ENCODE measurements at regions of chr15 and their contacts with region 1.

Region 1: DNA sequence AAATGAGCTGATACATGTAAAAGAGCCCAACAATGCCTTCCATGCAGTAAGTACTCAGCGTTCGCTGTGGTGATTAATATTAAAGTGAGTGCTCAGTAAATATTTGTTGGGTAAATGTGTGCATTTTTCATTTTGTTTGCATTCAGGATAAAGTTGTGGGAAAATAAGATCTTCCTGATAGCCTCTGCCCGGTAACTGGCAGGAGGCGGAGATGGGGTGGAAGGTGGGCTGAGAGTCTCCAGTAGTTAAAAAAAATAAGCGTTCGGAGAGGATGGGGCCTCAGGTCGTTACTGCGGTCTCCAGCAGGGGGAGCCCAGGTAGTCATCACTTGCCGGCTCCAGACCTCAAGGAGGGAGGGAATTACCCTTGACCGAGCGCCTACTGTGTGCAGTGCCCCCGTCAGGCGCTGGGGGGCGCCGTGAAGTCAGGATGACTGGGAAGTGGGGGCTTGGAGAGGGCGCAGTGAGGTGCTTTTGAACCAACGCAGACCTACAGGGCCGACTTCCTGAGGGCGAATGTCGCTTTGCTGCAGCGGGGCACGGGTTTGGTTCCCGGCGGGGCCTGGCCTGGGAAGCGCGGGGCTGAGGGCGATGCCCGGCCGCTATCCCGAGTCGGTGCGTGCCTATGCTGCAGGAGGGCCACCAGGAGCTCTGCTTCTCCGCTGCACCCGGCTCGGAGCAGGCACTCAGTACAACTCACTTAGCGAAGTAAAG is 80.1 kb downstream of the RHCG start:
- DNase-seq: peak; percentile 90 to 94
- ATAC-seq: peak; percentile 74 to 91
- H3K4me3 ChIP-seq: no peak overlapping the region
- H3K27ac ChIP-seq: no peak overlapping the region
- H3K4me1 ChIP-seq: peaks cover under 1% of the 10 kb centered on the region; the same call in 1 of the 3 replicates
- CTCF ChIP-seq: peak; percentile 93
- EP300 ChIP-seq: no peak
- POLR2A ChIP-seq: no peak
- RAD21 ChIP-seq: peak; percentile 59 to 63

Region 2: DNA sequence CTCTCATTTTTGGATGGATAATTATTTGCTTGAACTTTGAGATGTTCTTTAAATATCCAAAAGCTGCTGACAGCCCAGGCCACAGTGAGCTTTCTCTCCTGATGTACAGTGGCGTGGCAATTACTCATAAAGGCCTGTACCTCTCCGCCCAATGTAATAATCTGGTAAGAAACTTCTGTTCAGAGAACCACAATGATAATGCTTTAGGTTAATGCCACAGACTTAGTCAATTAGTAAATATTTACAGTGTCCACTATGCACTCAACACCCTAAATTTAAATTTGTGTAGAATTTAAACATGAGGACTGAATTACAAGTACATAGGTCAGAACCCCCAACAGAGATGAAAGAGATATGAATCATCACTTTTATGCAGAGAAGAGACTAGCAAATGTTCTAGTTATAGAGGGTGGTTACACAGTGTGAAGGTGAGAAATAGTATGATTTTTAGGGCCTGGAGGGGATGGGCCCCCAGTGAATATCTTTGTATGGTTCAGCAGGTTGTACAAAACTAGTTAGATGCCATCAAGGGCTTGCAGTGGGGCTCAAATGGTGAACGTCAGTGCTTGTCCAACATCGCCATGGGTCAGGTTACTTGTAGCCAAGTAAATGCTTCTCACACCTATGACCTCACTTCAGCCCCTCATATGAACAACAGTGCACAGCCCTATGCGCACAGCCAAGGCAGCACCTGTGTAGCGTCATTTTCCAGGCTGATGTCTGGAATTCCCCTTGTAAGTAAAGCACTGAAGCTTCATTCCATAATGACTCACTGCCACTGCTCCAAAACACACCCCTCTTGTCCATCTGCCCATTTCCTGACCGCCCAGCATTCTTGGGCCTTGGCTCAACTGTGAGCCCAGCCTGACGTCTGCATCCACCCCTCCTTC is 314.8 kb before region 1 on chr15:
- CTCF ChIA-PET with region 1: no interaction called
- POLR2A ChIA-PET with region 1: no interaction called
- DNase-seq: peak; percentile 97 to 98
- ATAC-seq: peak; percentile 92 to 93
- H3K4me3 ChIP-seq: no peak overlapping the region; the same call in 2 of the 3 replicates
- H3K27ac ChIP-seq: peak overlapping the region; percentile 85 to 88
- H3K4me1 ChIP-seq: peaks cover 99% of the 10 kb centered on the region
- CTCF ChIP-seq: no peak
- EP300 ChIP-seq: peak; percentile 69 to 71; a peak in 2 of 5 replicates
- POLR2A ChIP-seq: no peak
- RAD21 ChIP-seq: peak; percentile 8 to 24; a peak in 1 of 5 replicates

Region 3: DNA sequence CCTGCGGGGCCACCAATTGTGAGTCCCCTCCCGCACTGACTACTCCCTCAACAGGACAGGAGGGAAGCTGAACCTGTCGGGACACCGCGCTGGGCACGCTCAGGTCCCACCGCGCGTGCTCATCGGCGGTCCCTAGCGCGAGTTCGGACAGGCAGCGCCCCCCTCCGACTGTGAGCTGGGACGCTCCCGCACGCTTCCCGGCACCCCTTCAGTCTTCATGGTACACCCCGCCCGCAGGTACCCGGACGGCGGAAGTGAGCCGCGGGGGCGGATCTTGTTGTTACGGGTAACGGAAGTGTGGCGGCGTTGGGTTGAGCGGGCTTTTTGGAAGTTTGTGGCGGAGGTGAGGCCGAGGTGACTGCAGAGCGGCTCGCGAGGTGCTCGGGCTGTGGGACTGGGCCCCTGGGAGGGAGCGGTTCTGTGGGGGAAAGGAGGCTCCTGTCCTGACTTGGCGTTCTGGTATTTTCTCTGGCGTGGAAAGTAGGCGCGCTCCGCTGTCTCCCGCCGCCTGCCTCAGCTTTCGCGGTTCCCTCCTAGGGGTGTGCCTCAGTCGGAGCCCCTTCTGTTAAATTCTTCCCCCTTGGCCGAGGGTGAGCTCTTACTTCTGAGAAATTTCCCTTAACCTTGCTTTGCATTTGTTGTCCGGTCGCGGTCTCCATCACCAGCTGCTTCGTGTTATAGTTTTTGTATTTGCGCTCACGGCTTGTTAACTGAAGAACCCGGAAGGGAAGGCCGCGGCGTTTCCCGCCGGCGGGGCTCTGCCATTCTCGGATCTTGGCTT is 172.4 kb before region 1 on chr15 and contains the start of gene FANCI:
- CTCF ChIA-PET with region 1: no interaction called
- POLR2A ChIA-PET with region 1: no interaction called
- DNase-seq: peak; percentile 96 to 97
- ATAC-seq: peak; percentile 98
- H3K4me3 ChIP-seq: peak within 1 kb of the TSS; percentile 82
- H3K27ac ChIP-seq: peak within 1 kb of the TSS; percentile 79 to 88
- H3K4me1 ChIP-seq: peaks cover 32% of the 10 kb centered on the region; the same call in 2 of the 3 replicates
- CTCF ChIP-seq: peak; percentile 86
- EP300 ChIP-seq: no peak
- POLR2A ChIP-seq: peak; percentile 85
- RAD21 ChIP-seq: peak; percentile 67 to 77
- polyA plus RNA-seq, gene FANCI: 97.3 and 123 TPM in 2 replicates

Region 4: DNA sequence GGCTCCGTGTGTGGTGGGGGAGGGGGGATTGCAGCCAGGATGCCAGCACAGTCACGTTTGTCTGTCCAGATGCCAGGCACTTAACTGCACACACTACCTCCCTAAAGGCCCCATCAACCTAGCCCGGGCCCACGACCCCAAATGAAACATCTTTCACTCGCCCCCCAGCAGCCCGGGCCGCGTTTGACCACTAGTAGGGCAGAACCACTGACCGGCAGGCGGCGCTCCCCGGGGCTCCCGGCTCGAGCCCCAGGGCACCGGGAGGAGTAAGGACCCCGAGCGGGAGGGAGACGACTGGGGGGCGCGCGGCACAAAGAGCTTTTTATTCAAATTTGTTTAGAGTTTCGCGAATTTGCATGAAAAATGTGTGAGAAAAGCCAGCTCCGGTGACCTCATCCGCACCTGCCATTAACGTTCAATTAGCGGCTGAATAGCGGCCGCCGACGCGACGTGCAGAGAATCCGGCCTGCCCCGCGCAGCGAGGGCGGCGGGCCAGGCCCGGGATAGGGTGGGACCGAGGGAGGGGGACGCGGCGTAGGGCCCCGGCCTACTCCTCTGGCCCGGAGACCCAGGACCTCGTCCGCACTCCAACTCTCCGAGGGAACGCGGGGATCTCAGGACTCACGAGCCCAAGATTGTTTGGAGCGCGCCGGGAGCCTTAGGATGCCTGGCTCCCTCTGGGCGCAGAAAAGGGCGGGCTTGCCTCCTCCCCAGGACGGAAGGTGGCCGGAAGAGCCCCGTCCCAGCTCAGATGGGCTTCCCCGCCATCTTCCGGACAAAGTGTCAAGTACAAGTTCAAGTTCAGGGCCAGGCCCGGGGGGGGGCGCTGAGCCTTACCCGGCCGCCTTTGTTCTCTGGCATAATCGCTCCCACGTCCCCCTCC is 16.8 kb before region 1 on chr15:
- CTCF ChIA-PET with region 1: interaction called, 55 read pairs
- POLR2A ChIA-PET with region 1: no interaction called
- DNase-seq: peak; percentile 84 to 90
- ATAC-seq: peak; percentile 79 to 87
- H3K4me3 ChIP-seq: peak overlapping the region; percentile 79
- H3K27ac ChIP-seq: peak overlapping the region; percentile 86 to 87
- H3K4me1 ChIP-seq: peaks cover 24% of the 10 kb centered on the region
- CTCF ChIP-seq: peak; percentile 62
- EP300 ChIP-seq: no peak
- POLR2A ChIP-seq: peak; percentile 41; the same call in 1 of the 2 replicates
- RAD21 ChIP-seq: peak; percentile 31 to 37; a peak in 2 of 5 replicates

Region 5: DNA sequence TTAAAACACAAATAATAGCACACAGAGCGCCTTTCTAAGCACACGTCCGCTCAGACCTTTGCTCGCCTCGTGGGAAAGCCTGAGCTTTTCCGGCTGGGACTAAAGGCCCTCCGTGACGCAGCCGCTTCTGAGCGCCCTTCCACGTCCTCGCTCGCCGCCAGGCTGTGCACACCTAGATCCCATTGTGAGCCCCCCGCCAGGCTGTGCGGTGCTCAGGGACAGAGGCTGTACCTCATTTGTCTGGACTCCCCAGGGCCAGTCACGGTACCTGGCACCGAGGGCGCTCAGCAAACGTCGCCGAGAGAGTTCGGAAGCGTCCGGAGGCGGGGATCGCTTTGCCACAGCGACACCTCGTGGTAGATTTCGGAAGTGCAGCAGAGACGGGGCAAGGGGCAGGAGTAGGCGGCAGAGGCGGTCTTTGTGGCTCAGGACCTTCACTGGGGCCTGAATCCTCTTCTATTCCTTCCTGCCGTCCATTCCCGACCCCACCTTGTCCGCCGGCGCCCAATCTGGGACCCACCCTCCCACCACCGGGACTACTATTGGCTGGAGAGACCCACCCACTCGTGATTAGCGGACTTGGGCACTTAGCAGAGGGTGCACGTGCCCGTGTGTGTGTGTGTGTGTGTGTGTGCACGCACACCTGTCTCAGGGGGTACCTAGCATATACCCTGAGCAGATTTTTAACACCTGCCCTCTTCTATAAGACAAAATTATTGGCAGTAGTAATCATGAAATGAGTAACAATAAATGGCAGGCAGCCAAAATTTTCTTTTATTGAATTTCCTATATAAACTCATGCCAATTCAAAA is 14.4 kb after region 1 on chr15:
- CTCF ChIA-PET with region 1: interaction called, 131 read pairs
- POLR2A ChIA-PET with region 1: no interaction called
- DNase-seq: peak; percentile 80 to 96
- ATAC-seq: peak; percentile 80 to 96
- H3K4me3 ChIP-seq: peak overlapping the region; percentile 41
- H3K27ac ChIP-seq: peak overlapping the region; percentile 69 to 81
- H3K4me1 ChIP-seq: peaks cover 27% of the 10 kb centered on the region; the same call in 2 of the 3 replicates
- CTCF ChIP-seq: peak; percentile 96
- EP300 ChIP-seq: no peak
- POLR2A ChIP-seq: 0 out of 2 replicates have a peak, but pooled peaks have one; percentile 8
- RAD21 ChIP-seq: peak; percentile 83 to 85

Region 6: DNA sequence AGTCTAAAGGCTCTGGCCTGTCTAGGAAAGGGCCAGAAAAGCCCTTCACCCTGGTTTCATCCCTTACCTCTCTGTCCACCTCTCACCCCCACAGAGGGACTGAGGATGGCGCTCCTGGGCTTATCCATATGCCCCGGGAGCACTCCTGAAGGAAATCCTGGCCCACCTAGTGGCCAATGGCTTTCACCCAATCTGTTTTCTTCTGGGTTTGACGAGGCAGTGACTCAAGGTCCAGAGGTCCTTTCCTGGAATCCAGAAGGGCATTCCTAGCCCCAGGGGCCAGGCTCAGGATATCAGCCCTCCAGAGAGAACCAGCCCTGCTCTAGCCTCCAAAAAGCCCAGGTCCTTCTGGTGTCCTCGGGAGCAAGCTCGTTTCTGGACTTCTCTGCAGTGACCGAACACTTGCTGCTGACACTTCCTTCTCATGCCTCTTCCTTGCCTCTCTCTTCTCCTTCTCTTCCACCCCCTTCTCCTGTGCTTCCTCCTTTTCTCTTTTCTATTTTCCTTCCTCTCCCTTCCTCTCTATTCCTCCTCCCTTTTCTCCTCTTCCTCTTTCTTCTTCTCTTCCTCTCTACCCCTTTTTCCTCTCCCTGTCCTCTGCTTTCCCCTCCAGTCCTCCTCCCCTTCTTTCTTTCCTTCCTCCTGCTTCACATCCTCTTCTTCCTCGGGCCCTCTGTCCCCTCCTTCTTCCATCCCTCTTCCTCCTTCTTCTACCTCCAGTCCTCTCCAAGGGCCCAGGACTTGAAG is 20.4 kb after region 1 on chr15:
- CTCF ChIA-PET with region 1: interaction called, 46 read pairs
- POLR2A ChIA-PET with region 1: no interaction called
- DNase-seq: peak; percentile 36 to 47
- ATAC-seq: peak; percentile 51 to 79
- H3K4me3 ChIP-seq: no peak overlapping the region
- H3K27ac ChIP-seq: peak overlapping the region in 1 of 2 experiments; percentile 17; a peak in 1 of 6 replicates
- H3K4me1 ChIP-seq: peaks cover 10% of the 10 kb centered on the region; the same call in 1 of the 3 replicates
- CTCF ChIP-seq: no peak
- EP300 ChIP-seq: no peak
- POLR2A ChIP-seq: no peak
- RAD21 ChIP-seq: no peak

Region 7: DNA sequence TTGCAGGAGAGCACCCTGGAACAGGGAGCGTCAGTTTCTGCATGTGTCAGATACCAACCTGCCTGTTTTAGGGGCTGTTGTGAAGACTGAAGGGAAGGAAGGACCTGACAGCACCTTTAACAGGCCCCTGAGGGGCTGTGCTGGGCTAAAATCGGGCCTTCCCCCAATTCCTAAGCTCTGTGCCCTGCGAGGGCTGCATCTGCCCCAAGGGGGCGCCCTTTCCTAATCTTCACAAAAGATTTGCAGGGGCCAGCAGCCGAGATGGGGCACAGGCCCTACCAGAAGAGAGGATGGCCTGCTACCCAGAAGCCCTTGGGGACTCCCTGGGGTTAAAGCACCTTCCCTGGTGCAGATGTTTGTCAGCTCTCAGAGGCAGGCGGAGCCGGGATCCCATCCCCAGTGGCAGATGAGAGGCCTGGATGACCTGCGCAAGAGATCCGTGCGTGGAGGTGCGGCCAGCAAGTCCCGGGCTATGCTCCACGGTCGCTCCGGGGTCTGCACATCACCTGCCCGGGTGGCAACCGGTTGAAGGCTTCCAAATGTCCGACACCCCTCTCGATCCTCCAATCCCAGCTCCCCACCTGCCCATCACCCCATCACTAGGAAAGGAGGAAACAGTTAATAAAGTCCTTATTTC is 26.5 kb after region 1 on chr15:
- CTCF ChIA-PET with region 1: interaction called, 46 read pairs
- POLR2A ChIA-PET with region 1: no interaction called
- DNase-seq: peak; percentile 68 to 88
- ATAC-seq: peak; percentile 73 to 93
- H3K4me3 ChIP-seq: no peak overlapping the region
- H3K27ac ChIP-seq: no peak overlapping the region
- H3K4me1 ChIP-seq: no peaks in the 10 kb centered on the region
- CTCF ChIP-seq: peak; percentile 84
- EP300 ChIP-seq: no peak
- POLR2A ChIP-seq: no peak
- RAD21 ChIP-seq: peak; percentile 77

Region 8: DNA sequence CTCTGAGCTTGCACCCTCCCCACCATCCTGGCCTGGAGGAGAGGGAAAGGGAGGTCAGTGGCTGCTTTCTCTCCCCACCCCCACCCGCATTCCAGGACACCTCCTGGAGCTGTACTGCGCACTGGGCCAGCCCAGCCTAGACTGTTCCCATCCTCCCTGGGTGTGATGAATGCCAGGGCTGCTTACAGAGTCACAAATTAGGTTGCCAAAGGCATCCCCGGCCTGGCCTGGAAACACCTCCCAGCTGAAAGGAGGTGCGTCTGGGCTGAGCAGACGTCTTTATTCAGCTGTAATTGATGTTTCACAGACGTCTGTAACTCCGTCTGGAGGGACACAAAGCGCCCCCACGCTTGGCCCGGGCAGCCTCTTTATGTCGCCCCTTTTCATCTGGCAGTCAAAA is 32.5 kb after region 1 on chr15:
- CTCF ChIA-PET with region 1: interaction called, 10 read pairs
- POLR2A ChIA-PET with region 1: no interaction called
- DNase-seq: no peak
- ATAC-seq: peak in 1 of 2 experiments; percentile 9; a peak in 1 of 6 replicates
- H3K4me3 ChIP-seq: no peak overlapping the region
- H3K27ac ChIP-seq: no peak overlapping the region
- H3K4me1 ChIP-seq: peaks cover 18% of the 10 kb centered on the region; the same call in 2 of the 3 replicates
- CTCF ChIP-seq: no peak
- EP300 ChIP-seq: no peak
- POLR2A ChIP-seq: no peak
- RAD21 ChIP-seq: no peak

Region 9: GRCh38 chr15:89496155-89497098 is 80.1 kb after region 1 on chr15 and contains the start of gene RHCG:
- CTCF ChIA-PET with region 1: no interaction called
- POLR2A ChIA-PET with region 1: no interaction called
- DNase-seq: peak; percentile 80 to 94
- ATAC-seq: peak; percentile 69 to 78
- H3K4me3 ChIP-seq: peak within 1 kb of the TSS; percentile 51
- H3K27ac ChIP-seq: peak within 1 kb of the TSS; percentile 80 to 88
- H3K4me1 ChIP-seq: peaks cover 44% of the 10 kb centered on the region
- CTCF ChIP-seq: peak; percentile 74
- EP300 ChIP-seq: peak; percentile 66 to 73; a peak in 2 of 5 replicates
- POLR2A ChIP-seq: peak; percentile 49
- RAD21 ChIP-seq: peak; percentile 68
- polyA plus RNA-seq, gene RHCG: 11.0 and 16.6 TPM in 2 replicates

Region 10: DNA sequence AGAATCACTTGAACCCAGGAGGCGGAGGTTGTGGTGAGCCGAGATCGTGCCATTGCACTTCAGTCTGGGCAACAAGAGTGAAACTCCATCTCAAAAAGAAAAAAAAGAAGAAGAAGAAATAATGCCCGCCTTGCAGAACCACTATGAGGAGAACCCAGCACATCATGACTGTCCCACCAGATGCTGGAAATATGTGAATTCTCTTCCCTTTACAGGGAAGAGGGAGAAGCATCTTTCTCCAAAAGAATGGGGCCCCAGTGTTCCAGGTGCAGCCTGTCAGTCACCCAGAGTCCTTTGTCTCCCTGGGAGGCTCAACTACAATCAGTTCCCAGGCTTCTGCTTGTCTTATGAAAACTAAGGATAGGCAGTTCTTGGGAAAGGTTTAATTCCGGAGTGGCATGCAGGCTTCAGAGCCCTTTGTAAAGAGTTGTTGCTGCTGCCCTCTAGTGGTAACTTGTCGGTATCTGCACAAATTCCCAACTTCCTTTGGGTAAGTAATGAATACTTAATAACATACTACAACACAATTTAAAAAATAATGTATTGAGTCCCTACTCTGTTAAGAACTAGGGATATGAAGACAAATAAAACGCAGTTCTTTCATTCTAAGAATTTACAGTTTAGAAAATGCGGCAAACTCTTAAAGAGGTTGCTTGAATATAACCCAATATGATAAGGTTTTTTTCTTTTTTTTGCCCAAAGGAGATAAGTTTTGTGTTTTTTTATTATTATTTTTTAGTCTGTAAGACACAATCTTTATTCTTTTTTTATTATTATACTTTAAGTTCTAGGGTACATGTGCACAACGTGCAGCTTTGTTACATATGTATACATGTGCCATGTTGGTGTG is 140.3 kb after region 1 on chr15:
- CTCF ChIA-PET with region 1: interaction called, 12 read pairs
- POLR2A ChIA-PET with region 1: no interaction called
- DNase-seq: peak; percentile 72 to 89
- ATAC-seq: peak; percentile 79 to 93
- H3K4me3 ChIP-seq: no peak overlapping the region
- H3K27ac ChIP-seq: peak overlapping the region in 1 of 2 experiments; percentile 48; a peak in 1 of 6 replicates
- H3K4me1 ChIP-seq: peaks cover 3% of the 10 kb centered on the region; the same call in 2 of the 3 replicates
- CTCF ChIP-seq: peak; percentile 89
- EP300 ChIP-seq: no peak
- POLR2A ChIP-seq: no peak
- RAD21 ChIP-seq: peak; percentile 86 to 87

Measured in A549 (cell line).